ENCODE measurements at regions of chrX and their contacts with region 1.

Region 1: GRCh38 chrX:50579955-50580354 is 109.3 kb upstream of the DGKK start:
- DNase-seq: peak; percentile 49
- H3K4me3 ChIP-seq: no peak overlapping the region
- H3K27ac ChIP-seq: no peak overlapping the region
- H3K4me1 ChIP-seq: no peaks in the 10 kb centered on the region
- H3K27me3 ChIP-seq: no peaks in the 10 kb centered on the region
- CTCF ChIP-seq: peak; percentile 34 to 35
- POLR2A ChIP-seq: no peak

Region 2: DNA sequence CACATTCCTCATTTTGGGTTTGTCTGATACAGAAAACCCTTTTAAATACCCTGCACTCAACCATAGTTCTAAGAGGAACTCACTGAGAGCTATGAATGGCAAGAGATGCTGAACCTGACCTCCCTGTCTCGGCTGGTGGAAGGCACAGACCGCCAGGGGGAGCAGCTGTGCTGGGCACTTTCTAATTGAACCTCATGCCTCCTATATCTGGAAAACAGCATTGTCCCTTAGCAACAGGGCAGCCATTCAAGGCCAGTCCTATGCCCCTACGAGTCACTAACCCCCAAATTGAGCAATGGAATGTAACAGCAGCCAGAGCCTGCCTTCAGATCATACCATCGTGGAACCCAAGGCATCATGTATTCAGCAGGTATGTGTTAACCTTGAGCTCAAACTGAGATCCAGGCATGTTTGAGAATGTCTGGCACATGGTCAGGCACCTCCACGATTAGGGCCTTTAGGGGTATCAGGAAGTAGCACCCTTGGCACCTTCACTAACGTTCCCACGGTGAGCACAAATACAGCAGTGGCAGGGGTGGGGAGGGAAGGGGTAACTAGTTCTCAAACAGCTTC is 695.6 kb before region 1 on chrX:
- CTCF ChIA-PET with region 1: interaction called, 4 read pairs
- POLR2A ChIA-PET with region 1: no interaction called
- dilution Hi-C with region 1: no loop called
- intact Hi-C with region 1: loop called (anchors 5 kb)
- DNase-seq: peak; percentile 47
- H3K4me3 ChIP-seq: no peak overlapping the region
- H3K27ac ChIP-seq: no peak overlapping the region
- H3K4me1 ChIP-seq: peaks cover 5% of the 10 kb centered on the region
- H3K27me3 ChIP-seq: no peaks in the 10 kb centered on the region
- CTCF ChIP-seq: peak; percentile 59 to 76
- POLR2A ChIP-seq: no peak

Region 3: DNA sequence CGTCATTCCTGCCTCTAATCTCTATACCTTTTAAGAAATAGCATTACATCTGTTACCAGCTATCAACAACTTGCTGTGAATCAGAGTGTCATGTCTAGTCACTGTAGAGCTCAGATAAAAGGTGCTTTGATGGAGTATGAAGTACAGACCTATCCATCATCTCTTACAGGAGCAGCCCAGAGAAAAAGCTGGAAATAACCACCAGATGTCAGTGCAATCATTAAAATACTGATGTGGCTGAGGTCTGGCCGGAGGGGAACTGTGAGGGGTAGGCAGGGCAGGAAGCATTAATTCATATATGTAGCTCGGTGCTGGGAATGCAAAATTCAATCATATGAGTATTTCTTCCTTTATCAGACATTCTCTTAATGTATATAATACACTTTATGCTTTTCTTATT is 479.8 kb before region 1 on chrX:
- CTCF ChIA-PET with region 1: interaction called, 25 read pairs
- POLR2A ChIA-PET with region 1: no interaction called
- dilution Hi-C with region 1: no loop called
- intact Hi-C with region 1: loop called (anchors 1 kb)
- DNase-seq: peak; percentile 45
- H3K4me3 ChIP-seq: no peak overlapping the region
- H3K27ac ChIP-seq: no peak overlapping the region
- H3K4me1 ChIP-seq: peaks cover 6% of the 10 kb centered on the region
- H3K27me3 ChIP-seq: no peaks in the 10 kb centered on the region
- CTCF ChIP-seq: peak; percentile 12 to 20
- POLR2A ChIP-seq: no peak

Region 4: GRCh38 chrX:50747471-50747900 is 167.5 kb after region 1 on chrX:
- CTCF ChIA-PET with region 1: no interaction called
- POLR2A ChIA-PET with region 1: no interaction called
- dilution Hi-C with region 1: no loop called
- intact Hi-C with region 1: no loop called
- DNase-seq: peak; percentile 32
- H3K4me3 ChIP-seq: no peak overlapping the region
- H3K27ac ChIP-seq: no peak overlapping the region
- H3K4me1 ChIP-seq: no peaks in the 10 kb centered on the region
- H3K27me3 ChIP-seq: no peaks in the 10 kb centered on the region
- CTCF ChIP-seq: peak; percentile 55 to 56
- POLR2A ChIP-seq: no peak

Region 5: DNA sequence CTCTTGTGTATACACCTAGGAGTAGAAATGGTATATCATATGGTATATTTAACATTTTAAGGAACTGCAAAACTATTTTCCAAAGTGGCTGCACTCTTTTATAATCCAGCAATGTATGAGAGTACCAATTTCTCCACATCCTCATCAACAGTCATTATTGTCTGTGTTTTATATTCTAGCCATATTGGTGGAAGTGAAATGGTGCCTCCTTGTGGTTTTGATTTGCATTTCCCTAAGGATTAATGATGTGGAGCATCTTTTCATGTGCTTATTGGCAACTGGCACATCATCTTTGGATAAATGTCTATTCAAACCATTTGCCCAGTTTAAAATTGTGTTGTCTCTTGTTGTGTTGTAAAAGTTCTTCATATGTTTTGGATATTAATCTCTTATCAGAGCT is 340.2 kb after region 1 on chrX:
- CTCF ChIA-PET with region 1: no interaction called
- POLR2A ChIA-PET with region 1: no interaction called
- dilution Hi-C with region 1: no loop called
- intact Hi-C with region 1: loop called (anchors 5 kb)
- DNase-seq: peak; percentile 46
- H3K4me3 ChIP-seq: no peak overlapping the region
- H3K27ac ChIP-seq: no peak overlapping the region
- H3K4me1 ChIP-seq: no peaks in the 10 kb centered on the region
- H3K27me3 ChIP-seq: no peaks in the 10 kb centered on the region
- CTCF ChIP-seq: peak in 1 of 2 donors; percentile 31
- POLR2A ChIP-seq: no peak